ENCODE measurements at regions of chr16 and their contacts with region 1.

Region 1: GRCh38 chr16:84754353-84754856 is 54.6 kb downstream of the USP10 start:
- DNase-seq: no peak
- ATAC-seq: peak; percentile 86
- H3K4me3 Mint-ChIP-seq: no peak overlapping the region
- H3K27ac Mint-ChIP-seq: no peak overlapping the region
- H3K4me1 Mint-ChIP-seq: peaks cover 67% of the 10 kb centered on the region
- H3K27me3 Mint-ChIP-seq: no peaks in the 10 kb centered on the region
- CTCF ChIP-seq: peak; percentile 77

Region 2: DNA sequence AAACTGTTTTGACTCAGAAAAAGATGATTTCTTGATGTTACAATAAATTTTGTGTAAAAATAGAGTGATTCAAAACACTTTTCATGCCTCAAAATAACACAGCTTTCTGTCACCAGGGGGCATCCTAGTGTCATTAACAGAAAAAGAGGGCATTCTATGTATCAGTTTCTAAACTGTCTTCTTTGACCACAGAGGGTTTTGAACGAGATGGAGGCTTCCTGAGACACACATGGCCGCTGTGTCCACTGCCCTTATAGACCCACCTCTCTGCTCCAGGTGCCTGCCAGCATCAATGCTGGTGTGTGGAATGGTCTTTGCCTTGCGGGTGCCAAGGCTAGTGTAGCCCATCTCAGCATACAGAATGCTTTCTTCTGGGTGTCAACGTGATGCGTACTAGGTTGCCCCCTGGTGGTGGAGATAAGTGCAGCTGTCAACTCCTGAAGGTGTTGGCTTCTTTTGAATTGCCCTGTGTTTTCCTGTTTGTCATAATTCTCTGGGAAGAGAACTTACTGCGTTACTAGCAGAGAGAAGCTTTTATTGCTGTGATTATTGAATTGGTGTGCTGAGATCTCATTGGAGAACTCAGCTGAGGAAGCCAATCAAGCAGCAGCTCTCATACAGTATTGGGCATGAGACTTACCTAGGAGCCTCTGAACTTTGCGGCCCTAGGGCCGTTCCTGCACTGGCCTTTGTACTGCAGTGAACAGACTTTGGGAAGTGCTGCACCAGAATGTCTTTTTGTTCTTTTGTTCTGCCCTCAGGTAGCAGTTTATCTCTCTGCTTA is 16.0 kb before region 1 on chr16:
- CTCF ChIA-PET with region 1: interaction called, 22 read pairs
- POLR2A ChIA-PET with region 1: interaction called, 3 read pairs
- intact Hi-C with region 1: loop called (anchors 1 kb)
- DNase-seq: peak; percentile 57
- ATAC-seq: peak; percentile 92
- H3K4me3 Mint-ChIP-seq: no peak overlapping the region
- H3K27ac Mint-ChIP-seq: peak overlapping the region; percentile 68
- H3K4me1 Mint-ChIP-seq: peaks cover 39% of the 10 kb centered on the region
- H3K27me3 Mint-ChIP-seq: no peaks in the 10 kb centered on the region
- CTCF ChIP-seq: peak; percentile 80

Region 3: GRCh38 chr16:84970447-84971127 is 216.2 kb after region 1 on chr16:
- CTCF ChIA-PET with region 1: interaction called, 7 read pairs
- POLR2A ChIA-PET with region 1: no interaction called
- intact Hi-C with region 1: loop called (anchors 1 kb)
- DNase-seq: peak; percentile 65
- ATAC-seq: peak; percentile 81
- H3K4me3 Mint-ChIP-seq: no peak overlapping the region
- H3K27ac Mint-ChIP-seq: no peak overlapping the region
- H3K4me1 Mint-ChIP-seq: peaks cover 4% of the 10 kb centered on the region
- H3K27me3 Mint-ChIP-seq: peaks cover 3% of the 10 kb centered on the region
- CTCF ChIP-seq: peak; percentile 53

Measured in activated B cell treated with CpG ODN at 0.5 μM for 24 hours (primary cell).